ENCODE measurements at regions of chr1 and their contacts with region 1.

Region 1: GRCh38 chr1:152189657-152190442 is 30.8 kb upstream of the RPTN start:
- DNase-seq: peak; percentile 90
- H3K4me3 Mint-ChIP-seq: peak overlapping the region; percentile 60
- H3K27ac Mint-ChIP-seq: peak overlapping the region; percentile 1
- H3K4me1 Mint-ChIP-seq: peaks cover 41% of the 10 kb centered on the region
- H3K27me3 Mint-ChIP-seq: peaks cover 11% of the 10 kb centered on the region
- CTCF ChIP-seq: peak; percentile 91

Region 2: GRCh38 chr1:151773702-151774101 is 416.1 kb before region 1 on chr1:
- CTCF ChIA-PET with region 1: no interaction called
- POLR2A ChIA-PET with region 1: no interaction called
- intact Hi-C with region 1: no loop called
- DNase-seq: peak; percentile 83
- H3K4me3 Mint-ChIP-seq: no peak overlapping the region
- H3K27ac Mint-ChIP-seq: peak overlapping the region; percentile 2
- H3K4me1 Mint-ChIP-seq: peaks cover 6% of the 10 kb centered on the region
- H3K27me3 Mint-ChIP-seq: no peaks in the 10 kb centered on the region
- CTCF ChIP-seq: no peak

Region 3: DNA sequence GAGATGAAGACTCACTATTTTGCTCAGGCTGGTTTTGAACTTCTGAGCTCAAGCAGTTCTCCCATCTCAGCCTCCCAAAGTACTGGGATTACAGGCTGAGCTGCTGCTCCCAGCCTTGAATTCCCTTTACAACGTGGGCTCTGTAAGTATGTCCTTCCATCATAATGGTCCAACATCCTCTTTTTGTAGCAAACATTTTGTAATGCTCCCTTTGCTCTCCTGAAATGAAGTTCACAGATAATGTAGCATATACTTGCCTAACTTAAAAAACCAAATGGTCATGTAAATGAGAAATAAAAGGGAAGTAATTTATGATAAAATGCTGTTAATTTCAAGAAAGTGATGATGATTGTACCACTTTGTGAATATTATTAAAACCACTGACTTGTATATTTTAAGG is 250.1 kb before region 1 on chr1:
- CTCF ChIA-PET with region 1: interaction called, 14 read pairs
- POLR2A ChIA-PET with region 1: no interaction called
- intact Hi-C with region 1: loop called (anchors 10 kb)
- DNase-seq: no peak
- H3K4me3 Mint-ChIP-seq: no peak overlapping the region
- H3K27ac Mint-ChIP-seq: no peak overlapping the region
- H3K4me1 Mint-ChIP-seq: peaks cover 13% of the 10 kb centered on the region
- H3K27me3 Mint-ChIP-seq: no peaks in the 10 kb centered on the region
- CTCF ChIP-seq: no peak

Region 4: DNA sequence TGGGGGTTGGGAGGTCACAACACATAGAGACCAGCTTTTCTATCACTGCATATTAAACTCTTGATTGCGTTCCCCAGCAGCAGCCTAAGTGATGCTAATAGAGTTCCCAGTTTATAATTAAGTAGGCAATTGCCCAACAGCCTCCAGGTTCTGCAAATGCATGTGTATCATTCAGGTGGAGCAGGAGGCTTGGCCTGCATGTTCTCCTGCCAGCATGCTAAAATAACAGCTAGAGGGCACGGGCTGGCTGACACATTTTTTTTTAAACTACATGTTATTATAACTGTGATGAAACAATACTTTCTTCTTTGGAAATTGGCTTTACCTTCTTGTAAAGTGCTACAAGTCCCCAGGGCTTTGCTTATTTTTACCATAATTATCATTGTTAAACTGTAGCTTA is 85.0 kb before region 1 on chr1:
- CTCF ChIA-PET with region 1: interaction called, 78 read pairs
- POLR2A ChIA-PET with region 1: interaction called, 42 read pairs
- intact Hi-C with region 1: no loop called
- DNase-seq: peak; percentile 54
- H3K4me3 Mint-ChIP-seq: no peak overlapping the region
- H3K27ac Mint-ChIP-seq: no peak overlapping the region
- H3K4me1 Mint-ChIP-seq: peaks cover 5% of the 10 kb centered on the region
- H3K27me3 Mint-ChIP-seq: peaks cover 13% of the 10 kb centered on the region
- CTCF ChIP-seq: no peak

Region 5: GRCh38 chr1:152148981-152149380 is 40.9 kb before region 1 on chr1:
- CTCF ChIA-PET with region 1: interaction called, 227 read pairs
- POLR2A ChIA-PET with region 1: interaction called, 46 read pairs
- intact Hi-C with region 1: no loop called
- DNase-seq: no peak
- H3K4me3 Mint-ChIP-seq: no peak overlapping the region
- H3K27ac Mint-ChIP-seq: no peak overlapping the region
- H3K4me1 Mint-ChIP-seq: no peaks in the 10 kb centered on the region
- H3K27me3 Mint-ChIP-seq: no peaks in the 10 kb centered on the region
- CTCF ChIP-seq: no peak

Region 6: DNA sequence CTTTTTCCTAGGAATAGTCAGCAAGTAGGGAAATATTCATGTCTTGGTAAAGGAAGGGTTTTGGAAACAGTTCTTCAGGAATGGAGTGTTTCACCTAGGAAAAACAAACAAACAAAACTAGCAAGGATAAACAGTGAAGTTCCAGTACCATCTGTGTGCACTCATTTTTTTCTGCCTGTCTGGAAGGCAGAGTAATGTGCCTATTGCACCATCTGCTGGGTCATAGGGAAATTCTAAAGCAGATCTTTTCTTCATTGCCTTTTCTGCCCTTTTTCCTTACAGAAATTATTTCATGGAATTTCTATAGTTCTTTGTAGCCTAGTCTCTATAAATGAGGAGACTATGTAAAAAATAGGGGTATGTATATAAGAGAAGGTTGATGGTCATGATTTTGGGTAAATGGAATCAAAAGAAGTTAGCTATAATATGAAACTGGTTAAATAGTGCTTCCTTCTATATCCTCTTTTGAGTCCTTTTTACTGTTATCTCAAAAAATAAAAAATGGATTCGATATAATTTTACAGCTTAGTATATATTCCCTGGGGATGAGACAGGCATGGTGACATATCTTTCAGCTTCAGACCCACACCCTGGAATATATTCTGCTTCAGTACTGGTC is 37.6 kb after region 1 on chr1:
- CTCF ChIA-PET with region 1: interaction called, 124 read pairs
- POLR2A ChIA-PET with region 1: interaction called, 22 read pairs
- intact Hi-C with region 1: loop called (anchors 1 kb)
- DNase-seq: peak; percentile 66
- H3K4me3 Mint-ChIP-seq: no peak overlapping the region
- H3K27ac Mint-ChIP-seq: no peak overlapping the region
- H3K4me1 Mint-ChIP-seq: peaks cover 17% of the 10 kb centered on the region
- H3K27me3 Mint-ChIP-seq: no peaks in the 10 kb centered on the region
- CTCF ChIP-seq: peak; percentile 79

Region 7: DNA sequence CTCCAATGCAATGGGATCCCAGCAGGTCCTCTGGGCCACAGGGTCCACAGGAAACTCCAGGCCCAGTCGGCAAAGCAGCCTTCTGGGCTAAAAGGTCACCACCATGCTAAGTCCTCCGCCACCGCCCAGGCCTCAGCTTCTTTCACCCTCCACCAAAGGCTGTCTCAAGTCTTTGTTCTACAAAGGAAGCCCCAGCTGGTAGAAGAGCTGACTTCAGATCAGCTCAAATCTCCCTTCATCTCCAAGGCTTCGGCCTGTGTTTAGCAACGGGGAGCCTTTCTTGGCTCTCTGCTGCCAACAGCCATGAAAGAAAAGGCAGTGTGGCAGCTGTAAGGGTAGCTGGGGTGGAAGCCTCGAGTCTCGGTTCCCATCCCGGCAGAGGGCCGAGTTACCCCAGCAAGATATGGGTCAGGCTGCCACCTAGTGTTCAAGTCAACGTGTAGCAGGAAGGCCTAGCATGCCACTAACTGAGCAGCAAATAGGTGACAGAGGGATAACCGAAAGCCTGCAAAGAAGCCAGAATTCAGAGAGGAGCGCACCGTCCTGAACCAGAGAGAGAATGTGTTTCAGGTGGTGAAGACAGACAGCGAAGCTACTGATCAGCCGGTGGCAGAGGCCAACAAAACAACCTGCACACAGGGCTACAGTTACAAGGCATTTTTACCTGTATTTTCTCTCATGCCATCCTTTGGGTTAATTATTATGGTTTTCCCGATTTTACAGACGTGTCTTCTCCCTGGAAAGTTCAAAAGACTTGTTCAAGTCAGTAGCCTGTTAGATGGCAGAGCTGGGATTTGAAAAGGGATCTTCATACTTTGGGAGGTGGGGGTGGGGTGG is 251.0 kb after region 1 on chr1:
- CTCF ChIA-PET with region 1: interaction called, 94 read pairs
- POLR2A ChIA-PET with region 1: interaction called, 7 read pairs
- intact Hi-C with region 1: loop called (anchors 1 kb)
- DNase-seq: peak; percentile 89
- H3K4me3 Mint-ChIP-seq: no peak overlapping the region
- H3K27ac Mint-ChIP-seq: no peak overlapping the region
- H3K4me1 Mint-ChIP-seq: peaks cover 24% of the 10 kb centered on the region
- H3K27me3 Mint-ChIP-seq: no peaks in the 10 kb centered on the region
- CTCF ChIP-seq: peak; percentile 91

Region 8: DNA sequence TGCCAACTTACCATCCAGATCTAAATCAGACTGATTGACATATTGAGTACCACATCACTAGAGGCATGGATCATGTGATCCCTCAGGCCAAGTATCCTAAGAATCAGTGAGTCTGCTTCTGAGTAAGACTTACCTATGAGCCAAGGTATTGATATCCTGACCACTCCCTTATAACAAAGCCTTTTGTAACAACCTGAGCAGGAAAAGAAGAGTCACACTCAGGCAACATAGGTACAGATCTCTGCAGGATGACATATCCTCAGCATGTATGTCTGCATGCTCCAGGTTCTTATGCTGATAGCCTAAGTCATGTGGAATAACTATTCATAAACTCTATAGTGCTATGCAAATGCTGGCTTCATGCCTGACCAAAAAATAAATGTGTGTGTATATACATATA is 635.1 kb after region 1 on chr1:
- CTCF ChIA-PET with region 1: no interaction called
- POLR2A ChIA-PET with region 1: no interaction called
- intact Hi-C with region 1: no loop called
- DNase-seq: no peak
- H3K4me3 Mint-ChIP-seq: no peak overlapping the region
- H3K27ac Mint-ChIP-seq: no peak overlapping the region
- H3K4me1 Mint-ChIP-seq: no peaks in the 10 kb centered on the region
- H3K27me3 Mint-ChIP-seq: peaks cover 15% of the 10 kb centered on the region
- CTCF ChIP-seq: no peak